Activated T-helper 1 cell treated with anti-CD3 and anti-CD28 coated beads, Interleukin-12 subunit alpha, Interleukin-12 subunit beta, Interleukin-2, Interleukin-4 antibody, amounts not matched to agents 30 ng/mL and 10 ng/mL and 1 ng/mL, durations not matched to agents 14 hours and 24 hours and 36 hours (primary cell): ENCODE measurements at regions of chr1 and their contacts with region 1.

Region 1: DNA sequence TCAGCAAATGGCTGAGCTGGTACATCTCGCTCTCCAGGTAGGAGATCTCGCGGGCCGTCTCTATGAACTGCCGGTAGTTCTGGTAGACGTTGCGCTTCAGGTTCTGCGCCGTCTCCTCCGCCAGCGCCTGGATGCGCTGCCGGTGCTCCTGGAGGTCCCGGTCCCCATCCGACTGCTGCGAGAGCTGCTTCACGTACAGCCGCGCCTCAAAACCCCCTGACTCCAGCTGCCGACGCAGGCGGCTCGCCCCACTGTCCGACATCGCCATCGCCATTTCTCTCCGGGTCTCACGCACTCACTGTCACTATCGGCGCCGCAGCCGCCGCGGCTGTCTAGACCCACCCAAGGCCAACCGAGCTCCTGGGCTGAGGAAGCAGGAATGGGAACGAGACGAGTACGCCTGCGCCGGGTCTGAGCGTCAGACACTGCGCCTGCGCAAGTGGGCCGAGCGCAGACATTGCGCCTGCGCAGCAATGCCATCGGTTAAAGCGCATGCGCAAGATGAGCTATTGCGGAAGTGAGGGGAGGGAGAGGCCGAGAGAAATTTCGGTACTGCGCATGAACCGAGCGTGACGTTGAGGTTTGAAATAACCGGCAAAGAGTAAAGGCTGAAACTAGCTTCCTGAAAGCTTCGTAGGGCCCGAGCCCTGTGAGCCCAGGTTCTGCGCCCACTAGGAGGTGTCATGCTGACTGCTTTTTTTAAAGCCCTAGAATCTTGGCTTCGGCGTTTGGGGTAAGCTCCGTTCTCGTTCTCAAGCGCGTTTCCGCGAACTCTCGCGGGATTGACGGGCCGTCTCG is at the start of gene EXOC8:
- DNase-seq: peak; percentile 99
- H3K4me3 Mint-ChIP-seq: peak within 1 kb of the TSS; percentile 98
- H3K27ac Mint-ChIP-seq: peak within 1 kb of the TSS; percentile 100
- H3K4me1 Mint-ChIP-seq: peaks cover 62% of the 10 kb centered on the region
- H3K27me3 Mint-ChIP-seq: peaks cover 3% of the 10 kb centered on the region
- total RNA-seq, gene EXOC8: 14.4 and 15.6 TPM in 2 replicates

Region 2: GRCh38 chr1:230867903-230868735 is 469.6 kb before region 1 on chr1 and contains the start of gene C1orf198:
- intact Hi-C with region 1: loop called (anchors 5 kb)
- DNase-seq: peak; percentile 59
- H3K4me3 Mint-ChIP-seq: peak within 1 kb of the TSS; percentile 87
- H3K27ac Mint-ChIP-seq: peak within 1 kb of the TSS; percentile 80
- H3K4me1 Mint-ChIP-seq: peaks cover 28% of the 10 kb centered on the region
- H3K27me3 Mint-ChIP-seq: peaks cover 39% of the 10 kb centered on the region
- total RNA-seq, gene C1orf198: 14.1 and 14.6 TPM in 2 replicates

Region 3: GRCh38 chr1:231162297-231162969 is 175.2 kb before region 1 on chr1:
- intact Hi-C with region 1: no loop called
- DNase-seq: peak; percentile 12
- H3K4me3 Mint-ChIP-seq: no peak overlapping the region
- H3K27ac Mint-ChIP-seq: no peak overlapping the region
- H3K4me1 Mint-ChIP-seq: no peaks in the 10 kb centered on the region
- H3K27me3 Mint-ChIP-seq: peaks cover 64% of the 10 kb centered on the region

Region 4: DNA sequence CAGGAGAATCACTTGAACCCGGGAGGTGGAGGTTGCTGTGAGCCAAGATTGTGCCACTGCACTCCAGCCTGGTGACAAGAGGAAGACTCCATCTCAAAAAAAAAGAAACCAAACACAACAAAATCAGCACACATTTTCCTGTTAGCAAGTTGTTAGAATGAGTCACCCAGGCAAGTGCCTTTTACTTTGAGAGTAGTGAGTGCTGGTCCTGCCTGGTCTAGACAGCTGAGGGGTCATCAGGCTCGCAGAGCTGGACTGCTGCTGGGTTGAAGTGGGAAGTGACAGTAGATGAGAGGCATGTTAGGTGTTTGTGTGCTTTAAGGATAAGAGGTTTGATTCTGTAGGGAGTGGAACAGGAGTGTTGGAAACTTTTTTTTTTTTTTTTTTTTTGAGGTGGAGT is 64.8 kb before region 1 on chr1:
- intact Hi-C with region 1: loop called (anchors 1 kb)
- DNase-seq: peak; percentile 27
- H3K4me3 Mint-ChIP-seq: peak overlapping the region; percentile 83
- H3K27ac Mint-ChIP-seq: peak overlapping the region; percentile 100
- H3K4me1 Mint-ChIP-seq: peaks cover 39% of the 10 kb centered on the region
- H3K27me3 Mint-ChIP-seq: no peaks in the 10 kb centered on the region

Region 5: GRCh38 chr1:231376875-231377549 is 39.3 kb after region 1 on chr1:
- intact Hi-C with region 1: no loop called
- DNase-seq: peak; percentile 13
- H3K4me3 Mint-ChIP-seq: peak overlapping the region; percentile 6
- H3K27ac Mint-ChIP-seq: peak overlapping the region; percentile 78
- H3K4me1 Mint-ChIP-seq: peaks cover 43% of the 10 kb centered on the region
- H3K27me3 Mint-ChIP-seq: no peaks in the 10 kb centered on the region